Activated T-helper 1 cell treated with anti-CD3 and anti-CD28 coated beads, Interleukin-12 subunit alpha, Interleukin-12 subunit beta, Interleukin-2, Interleukin-4 antibody, amounts not matched to agents 30 ng/mL and 10 ng/mL and 1 ng/mL, durations not matched to agents 14 hours and 24 hours and 36 hours (primary cell): ENCODE measurements at regions of chr10 and their contacts with region 1.

Region 1: GRCh38 chr10:49177391-49178355 is 10.5 kb downstream of the TMEM273 start:
- DNase-seq: peak; percentile 68
- H3K4me3 Mint-ChIP-seq: peak overlapping the region; percentile 64
- H3K27ac Mint-ChIP-seq: peak overlapping the region; percentile 97
- H3K4me1 Mint-ChIP-seq: peaks cover 65% of the 10 kb centered on the region
- H3K27me3 Mint-ChIP-seq: peaks cover 4% of the 10 kb centered on the region

Region 2: DNA sequence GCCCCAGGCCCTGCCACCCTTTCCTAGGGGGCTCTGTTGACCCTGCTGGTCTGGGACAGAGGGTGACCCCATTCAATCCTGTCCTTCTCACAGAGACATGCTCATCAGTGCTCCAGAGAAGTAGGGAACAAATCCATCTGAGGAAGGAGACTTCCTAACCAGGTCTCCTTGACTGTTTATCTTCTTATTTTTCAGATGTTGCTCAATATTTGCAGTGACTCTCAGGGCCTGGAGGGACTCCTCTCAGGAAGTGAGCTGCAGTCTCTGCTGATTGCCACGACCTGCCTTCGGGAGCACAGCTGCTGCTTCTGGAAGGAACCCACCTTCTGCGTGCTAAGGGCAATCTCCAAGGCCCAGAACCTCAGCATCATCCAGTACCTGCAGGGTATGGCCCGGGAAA is 452.0 kb before region 1 on chr10:
- intact Hi-C with region 1: no loop called
- DNase-seq: no peak
- H3K4me3 Mint-ChIP-seq: no peak overlapping the region
- H3K27ac Mint-ChIP-seq: no peak overlapping the region
- H3K4me1 Mint-ChIP-seq: no peaks in the 10 kb centered on the region
- H3K27me3 Mint-ChIP-seq: peaks cover 1% of the 10 kb centered on the region

Region 3: DNA sequence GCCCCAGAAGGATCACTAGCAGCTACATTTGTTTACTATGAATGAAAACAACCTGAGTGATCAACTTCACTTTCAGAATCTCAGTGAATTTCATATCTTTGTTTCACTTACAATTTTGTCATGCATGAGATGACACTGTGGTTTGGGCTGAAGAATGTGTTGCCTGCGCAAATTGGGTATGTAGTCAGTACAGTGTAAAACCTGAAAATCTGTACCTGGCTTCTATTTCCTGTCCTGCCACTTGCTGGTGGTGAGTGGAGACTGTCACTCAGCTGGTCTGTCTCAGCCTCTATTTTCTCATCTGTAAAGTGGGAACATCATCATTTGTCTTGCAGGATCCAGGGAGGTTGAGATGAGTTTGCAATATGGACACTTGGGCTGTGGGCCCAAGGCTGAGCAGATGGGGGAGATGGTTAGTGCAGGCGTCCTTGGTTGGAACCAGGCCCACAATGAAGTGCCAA is 375.0 kb before region 1 on chr10:
- intact Hi-C with region 1: loop called (anchors 5 kb)
- DNase-seq: peak; percentile 10
- H3K4me3 Mint-ChIP-seq: no peak overlapping the region
- H3K27ac Mint-ChIP-seq: peak overlapping the region; percentile 27
- H3K4me1 Mint-ChIP-seq: peaks cover 49% of the 10 kb centered on the region
- H3K27me3 Mint-ChIP-seq: peaks cover 4% of the 10 kb centered on the region

Region 4: GRCh38 chr10:49164559-49165188 is 13.0 kb before region 1 on chr10:
- intact Hi-C with region 1: loop called (anchors 1 kb)
- DNase-seq: peak; percentile 31
- H3K4me3 Mint-ChIP-seq: no peak overlapping the region
- H3K27ac Mint-ChIP-seq: peak overlapping the region; percentile 25
- H3K4me1 Mint-ChIP-seq: peaks cover 33% of the 10 kb centered on the region
- H3K27me3 Mint-ChIP-seq: no peaks in the 10 kb centered on the region

Region 5: DNA sequence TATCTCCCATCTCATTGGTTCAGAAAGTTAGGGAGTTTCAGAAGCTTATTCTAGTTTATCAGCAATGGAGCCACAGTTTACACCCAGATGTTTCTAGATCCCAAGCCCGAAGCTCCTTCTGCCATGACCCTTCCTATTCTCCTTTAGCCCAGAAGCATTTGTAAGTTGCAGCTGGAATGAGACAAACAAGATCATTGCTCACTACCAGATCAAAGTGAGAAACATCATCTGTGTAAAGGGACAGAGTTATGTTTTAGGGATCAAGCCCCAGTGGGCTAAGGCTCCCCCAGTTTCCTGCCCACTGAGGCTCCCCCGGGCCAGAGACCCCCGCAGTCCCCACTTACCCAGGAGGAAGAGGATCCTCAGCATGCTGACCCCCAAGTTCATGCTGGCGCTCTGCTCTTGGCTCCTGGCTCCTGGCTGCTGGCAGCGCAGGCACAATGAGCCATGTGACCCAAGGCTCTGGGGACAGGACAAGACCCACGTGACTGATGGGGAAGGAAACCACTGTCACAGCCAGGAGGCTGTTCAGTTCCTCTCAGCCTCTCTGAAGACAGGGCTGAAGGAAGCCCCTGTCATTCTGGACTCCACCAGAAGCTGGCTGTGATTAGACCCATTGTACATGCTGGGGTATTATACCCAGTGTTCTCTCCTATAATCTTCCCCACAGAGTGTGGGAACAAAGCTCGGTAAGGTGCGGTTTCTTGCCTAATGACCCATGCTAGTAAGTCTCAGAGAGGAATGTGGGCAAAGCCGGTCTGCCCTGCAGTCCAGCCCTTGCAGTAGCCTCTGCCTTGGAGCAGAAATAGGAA is 10.5 kb after region 1 on chr10 and contains the start of gene TMEM273:
- intact Hi-C with region 1: no loop called
- DNase-seq: no peak
- H3K4me3 Mint-ChIP-seq: peak within 1 kb of the TSS; percentile 71
- H3K27ac Mint-ChIP-seq: peak within 1 kb of the TSS; percentile 59
- H3K4me1 Mint-ChIP-seq: peaks cover 55% of the 10 kb centered on the region
- H3K27me3 Mint-ChIP-seq: peaks cover 17% of the 10 kb centered on the region
- total RNA-seq, gene TMEM273: 16.2 and 16.7 TPM in 2 replicates

Region 6: GRCh38 chr10:49356944-49357343 is 179.3 kb after region 1 on chr10:
- intact Hi-C with region 1: loop called (anchors 2 kb)
- DNase-seq: no peak
- H3K4me3 Mint-ChIP-seq: no peak overlapping the region
- H3K27ac Mint-ChIP-seq: no peak overlapping the region
- H3K4me1 Mint-ChIP-seq: peaks cover 7% of the 10 kb centered on the region
- H3K27me3 Mint-ChIP-seq: peaks cover 3% of the 10 kb centered on the region

Region 7: GRCh38 chr10:49419005-49419404 is 241.3 kb after region 1 on chr10:
- intact Hi-C with region 1: no loop called
- DNase-seq: no peak
- H3K4me3 Mint-ChIP-seq: no peak overlapping the region
- H3K27ac Mint-ChIP-seq: no peak overlapping the region
- H3K4me1 Mint-ChIP-seq: no peaks in the 10 kb centered on the region
- H3K27me3 Mint-ChIP-seq: no peaks in the 10 kb centered on the region